HepG2 (cell line): ENCODE measurements at regions of chr2 and their contacts with region 1.

Region 1: GRCh38 chr2:36461039-36461681 is 105.6 kb downstream of the CRIM1 start:
- DNase-seq: peak; percentile 46
- ATAC-seq: no peak
- H3K4me3 ChIP-seq: no peak overlapping the region
- H3K27ac ChIP-seq: no peak overlapping the region
- H3K4me1 ChIP-seq: peaks cover 33% of the 10 kb centered on the region
- H3K27me3 ChIP-seq: no peaks in the 10 kb centered on the region
- CTCF ChIP-seq: no peak
- EP300 ChIP-seq: no peak
- POLR2A ChIP-seq: no peak
- RAD21 ChIP-seq: no peak

Region 2: GRCh38 chr2:36376319-36376765 is 84.8 kb before region 1 on chr2:
- CTCF ChIA-PET with region 1: no interaction called
- POLR2A ChIA-PET with region 1: interaction called, 5 read pairs
- in situ Hi-C with region 1: no loop called
- intact Hi-C with region 1: loop called (anchors 2 kb)
- DNase-seq: peak; percentile 93
- ATAC-seq: peak; percentile 77
- H3K4me3 ChIP-seq: peak overlapping the region in 2 of 3 experiments; percentile 6 to 16; a peak in 1 of 6 replicates
- H3K27ac ChIP-seq: peak overlapping the region; percentile 75
- H3K4me1 ChIP-seq: peaks cover 100% of the 10 kb centered on the region
- H3K27me3 ChIP-seq: no peaks in the 10 kb centered on the region
- CTCF ChIP-seq: no peak
- EP300 ChIP-seq: peak in 1 of 2 experiments; percentile 74; a peak in 2 of 4 replicates
- POLR2A ChIP-seq: no peak
- RAD21 ChIP-seq: no peak

Region 3: DNA sequence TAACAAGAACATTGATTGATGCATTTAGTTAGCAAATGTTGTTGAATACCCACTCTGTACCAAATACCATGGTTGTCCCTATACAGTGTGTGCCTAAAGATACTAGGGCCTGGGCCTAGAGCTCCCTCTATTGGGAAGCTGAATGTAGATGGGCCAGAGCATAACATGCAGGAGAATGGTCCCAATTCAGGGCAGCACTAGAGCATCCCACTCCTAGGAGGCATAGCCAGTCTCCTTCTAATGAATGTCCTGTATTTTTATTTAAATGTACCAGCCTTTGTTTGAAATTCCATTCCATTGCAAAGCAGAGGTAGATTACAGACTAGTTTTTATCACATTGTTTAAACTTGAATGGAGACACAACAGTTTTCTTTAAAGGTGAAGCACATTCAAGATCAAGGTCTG is 46.2 kb after region 1 on chr2:
- CTCF ChIA-PET with region 1: no interaction called
- POLR2A ChIA-PET with region 1: interaction called, 4 read pairs
- in situ Hi-C with region 1: no loop called
- intact Hi-C with region 1: loop called (anchors 1 kb)
- DNase-seq: peak; percentile 79
- ATAC-seq: peak; percentile 92
- H3K4me3 ChIP-seq: no peak overlapping the region
- H3K27ac ChIP-seq: no peak overlapping the region
- H3K4me1 ChIP-seq: peaks cover 41% of the 10 kb centered on the region
- H3K27me3 ChIP-seq: no peaks in the 10 kb centered on the region
- CTCF ChIP-seq: peak; percentile 91
- EP300 ChIP-seq: no peak
- POLR2A ChIP-seq: no peak
- RAD21 ChIP-seq: peak; percentile 86